PC-3 (cell line): ENCODE measurements at regions of chr4 and their contacts with region 1.

Region 1: DNA sequence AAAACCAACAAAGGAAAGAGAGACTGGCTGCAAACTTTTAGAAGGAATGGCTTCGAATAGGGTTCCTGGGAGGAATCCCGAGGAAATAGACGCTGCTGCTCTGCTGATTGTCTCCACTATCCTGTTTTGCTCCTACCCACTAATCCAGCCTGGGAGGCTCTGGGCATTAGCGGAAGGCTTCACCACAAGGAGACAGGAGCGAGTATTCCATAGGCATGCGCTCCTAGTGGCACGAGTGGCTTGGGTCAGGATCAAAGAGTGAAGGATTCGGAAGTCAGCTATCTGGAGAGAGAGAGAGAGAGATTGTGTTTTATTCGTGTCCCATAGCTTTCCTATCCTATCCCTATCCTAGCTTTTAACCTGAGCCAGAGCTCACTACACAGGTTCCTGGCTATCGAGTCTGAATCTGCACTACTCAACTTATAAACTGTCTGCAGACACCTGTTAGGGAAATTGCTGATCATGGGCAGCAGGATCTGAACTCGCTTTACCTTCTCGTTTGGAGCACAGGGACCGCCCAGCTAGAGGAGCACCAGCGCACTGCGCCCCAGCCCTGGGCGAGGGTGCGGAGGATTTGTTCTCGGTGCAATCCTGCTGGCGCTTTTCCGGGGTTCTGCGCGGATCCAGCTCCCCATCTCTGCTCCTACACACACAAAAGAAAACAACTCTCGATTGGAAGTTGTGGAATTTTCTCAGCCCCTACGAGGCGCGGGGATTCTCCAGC is 740 bp upstream of the NPY2R start:
- DNase-seq: peak; percentile 64
- ATAC-seq: peak; percentile 89
- H3K4me3 ChIP-seq: peak overlapping the region; percentile 68
- H3K27ac ChIP-seq: no peak overlapping the region
- H3K4me1 ChIP-seq: no peaks in the 10 kb centered on the region; the same call in 1 of the 2 replicates
- H3K27me3 ChIP-seq: peaks cover 22% of the 10 kb centered on the region; the same call in 1 of the 2 replicates
- CTCF ChIP-seq: peak; percentile 47

Region 2: GRCh38 chr4:155099231-155099630 is 108.5 kb before region 1 on chr4:
- CTCF ChIA-PET with region 1: no interaction called
- POLR2A ChIA-PET with region 1: no interaction called
- intact Hi-C with region 1: no loop called
- DNase-seq: no peak
- ATAC-seq: no peak
- H3K4me3 ChIP-seq: no peak overlapping the region
- H3K27ac ChIP-seq: no peak overlapping the region
- H3K4me1 ChIP-seq: no peaks in the 10 kb centered on the region
- H3K27me3 ChIP-seq: no peaks in the 10 kb centered on the region
- CTCF ChIP-seq: no peak

Region 3: GRCh38 chr4:155353923-155354540 is 146.3 kb after region 1 on chr4:
- CTCF ChIA-PET with region 1: interaction called, 3 read pairs
- POLR2A ChIA-PET with region 1: no interaction called
- intact Hi-C with region 1: loop called (anchors 1 kb)
- DNase-seq: peak; percentile 73
- ATAC-seq: peak; percentile 84
- H3K4me3 ChIP-seq: no peak overlapping the region
- H3K27ac ChIP-seq: no peak overlapping the region
- H3K4me1 ChIP-seq: no peaks in the 10 kb centered on the region
- H3K27me3 ChIP-seq: no peaks in the 10 kb centered on the region
- CTCF ChIP-seq: peak; percentile 86